G401 (cell line): ENCODE measurements at regions of chr3 and their contacts with region 1.

Region 1: GRCh38 chr3:196995646-196996371 is 27.2 kb upstream of the PIGZ start:
- DNase-seq: peak; percentile 62

Region 2: GRCh38 chr3:196665962-196666867 is 329.6 kb before region 1 on chr3:
- in situ Hi-C with region 1: no loop called
- DNase-seq: peak; percentile 96

Region 3: DNA sequence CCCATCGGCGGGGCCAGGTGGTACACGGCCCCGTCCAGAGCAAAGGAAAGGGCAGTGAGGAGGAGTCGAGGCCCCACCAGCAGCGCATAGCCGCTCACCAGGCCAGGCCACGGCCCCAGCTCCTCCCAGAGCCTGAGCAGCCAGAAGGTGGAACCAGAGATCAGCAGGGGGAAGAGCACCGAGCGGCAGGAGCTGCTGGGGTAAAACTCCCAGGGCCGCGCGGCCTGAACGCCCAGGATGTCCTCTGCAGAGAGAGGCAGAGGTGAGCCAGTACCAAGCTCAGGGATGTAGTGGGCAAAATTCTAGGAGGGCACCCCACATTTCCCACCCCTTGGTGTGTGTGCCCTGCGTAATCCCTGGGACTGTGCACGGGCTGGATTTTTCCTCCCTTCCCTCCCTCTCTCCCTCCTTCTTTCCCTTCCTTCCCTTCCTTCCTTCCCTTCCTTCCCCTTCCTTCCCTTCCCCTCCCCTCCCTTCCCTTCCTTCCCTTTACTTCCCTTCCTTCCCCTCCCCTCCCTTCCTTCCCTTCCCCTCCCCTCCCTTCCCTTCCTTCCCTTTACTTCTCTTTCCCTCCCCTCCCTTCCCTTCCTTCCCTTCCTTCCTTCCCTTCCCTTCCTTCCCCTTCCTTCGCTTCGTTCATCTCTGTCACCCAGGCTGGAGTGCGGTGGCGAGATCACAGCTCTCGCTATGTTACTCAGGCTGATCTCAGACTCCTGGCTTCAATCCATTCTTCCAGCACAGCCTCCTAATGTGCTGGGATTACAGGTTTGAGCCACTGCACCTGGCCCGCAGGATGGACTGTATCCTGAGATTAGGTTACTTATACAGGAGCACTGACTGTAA is 47.1 kb before region 1 on chr3:
- in situ Hi-C with region 1: no loop called
- DNase-seq: peak; percentile 57

Region 4: DNA sequence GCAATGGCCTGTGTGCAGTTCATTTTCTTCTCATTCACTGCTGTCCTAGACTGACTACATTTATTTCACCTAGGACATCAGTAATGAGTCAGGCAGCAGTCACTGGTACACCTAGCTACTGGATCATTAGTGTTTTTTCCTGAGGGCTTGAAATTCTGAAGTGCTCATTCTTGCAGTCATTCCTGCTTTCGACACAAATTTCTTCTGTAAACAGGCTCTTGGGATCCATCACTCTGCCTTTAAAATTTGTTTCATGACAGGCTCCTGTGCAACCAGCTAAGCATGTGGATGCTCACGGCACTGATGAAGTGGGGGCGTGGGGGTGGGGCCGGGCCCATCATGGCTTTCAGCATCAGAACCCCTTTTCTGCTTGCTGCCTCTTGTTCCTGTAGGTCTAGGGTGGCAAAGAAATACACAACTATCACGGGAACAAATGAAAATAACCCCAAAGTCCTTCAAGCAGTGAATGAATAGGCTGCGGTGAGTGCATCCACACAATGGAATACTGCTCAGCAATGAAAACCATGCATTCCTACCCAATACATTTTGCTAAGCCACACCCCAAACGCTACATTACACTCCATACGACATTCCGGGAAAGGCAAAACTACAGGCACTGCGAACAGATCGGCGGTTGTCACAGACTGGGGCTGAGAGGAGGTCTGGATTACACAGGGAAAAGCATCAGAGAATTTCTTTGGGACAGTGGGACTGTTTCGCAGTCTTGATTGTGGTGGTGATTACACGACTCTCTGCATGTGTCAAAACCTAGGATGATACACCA is 43.1 kb after region 1 on chr3:
- in situ Hi-C with region 1: loop called (anchors 5 kb)
- DNase-seq: no peak